Activated B cell treated with CpG ODN at 0.5 μM for 24 hours (primary cell): ENCODE measurements at regions of chr11 and their contacts with region 1.

Region 1: DNA sequence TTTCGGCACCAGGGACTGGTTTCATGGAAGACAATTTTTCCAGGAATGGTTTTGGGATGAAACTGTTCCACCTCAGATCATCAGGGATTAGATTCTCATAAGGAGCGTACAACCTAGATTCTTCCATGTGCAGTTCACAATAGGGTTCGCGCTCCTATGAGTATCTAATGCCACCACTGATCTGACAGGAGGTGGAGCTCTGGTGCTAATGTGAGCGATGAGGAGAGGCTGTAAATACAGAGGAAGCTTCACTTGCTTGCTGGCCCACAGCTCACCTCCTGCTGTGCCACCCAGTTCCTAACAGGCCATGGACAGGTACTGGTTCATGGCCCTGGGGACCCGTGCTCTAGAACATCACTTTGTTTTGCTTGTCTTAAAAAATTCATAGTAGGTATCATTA is 41.8 kb upstream of the AMPD3 start:
- DNase-seq: no peak
- ATAC-seq: peak; percentile 96
- H3K4me3 Mint-ChIP-seq: no peak overlapping the region
- H3K27ac Mint-ChIP-seq: no peak overlapping the region
- H3K4me1 Mint-ChIP-seq: peaks cover 22% of the 10 kb centered on the region
- H3K27me3 Mint-ChIP-seq: no peaks in the 10 kb centered on the region
- CTCF ChIP-seq: no peak

Region 2: DNA sequence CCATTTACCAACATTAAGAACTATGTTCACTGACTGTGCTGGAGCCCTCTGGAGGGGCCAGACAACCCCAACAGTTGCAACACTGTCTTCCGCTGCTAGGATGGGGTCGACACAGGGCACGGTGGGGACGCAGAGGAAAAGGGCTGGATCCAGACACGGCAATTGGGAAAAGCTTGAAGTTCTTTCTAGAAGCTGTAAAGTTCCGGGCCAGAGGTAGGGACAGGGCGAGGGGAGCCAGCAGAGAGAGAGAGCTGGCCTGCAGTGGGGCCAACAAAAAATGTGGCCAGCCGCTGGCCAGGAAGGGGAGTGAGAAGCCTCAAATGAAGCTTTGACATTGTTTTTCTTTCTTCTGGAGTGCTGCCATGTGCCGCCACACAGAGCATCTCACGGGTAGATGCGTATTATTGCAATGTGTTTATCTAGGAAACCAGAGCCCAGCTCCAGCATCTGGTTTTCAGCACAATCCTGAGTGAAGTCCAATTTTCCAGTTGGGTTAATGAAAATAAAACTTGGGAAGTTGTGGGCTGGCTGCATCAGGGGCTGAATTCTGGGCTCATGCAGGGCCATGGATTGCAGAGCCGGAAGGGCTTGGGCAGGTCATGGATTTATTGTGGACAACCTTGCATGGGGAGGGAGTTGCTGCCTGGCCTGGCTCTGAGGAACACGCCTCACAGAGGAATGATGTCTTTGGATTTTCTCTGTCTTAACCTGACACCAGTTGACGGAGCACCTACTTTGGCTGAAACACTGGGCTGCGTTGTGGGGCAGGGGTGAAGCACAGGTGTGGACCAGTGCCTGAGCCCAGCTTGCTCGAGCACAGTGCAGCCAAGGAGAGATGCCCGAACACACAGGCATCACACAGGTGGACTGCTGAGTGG is 25.8 kb before region 1 on chr11:
- CTCF ChIA-PET with region 1: no interaction called
- POLR2A ChIA-PET with region 1: no interaction called
- intact Hi-C with region 1: no loop called
- DNase-seq: no peak
- ATAC-seq: no peak
- H3K4me3 Mint-ChIP-seq: no peak overlapping the region
- H3K27ac Mint-ChIP-seq: no peak overlapping the region
- H3K4me1 Mint-ChIP-seq: no peaks in the 10 kb centered on the region
- H3K27me3 Mint-ChIP-seq: peaks cover 36% of the 10 kb centered on the region
- CTCF ChIP-seq: no peak

Region 3: DNA sequence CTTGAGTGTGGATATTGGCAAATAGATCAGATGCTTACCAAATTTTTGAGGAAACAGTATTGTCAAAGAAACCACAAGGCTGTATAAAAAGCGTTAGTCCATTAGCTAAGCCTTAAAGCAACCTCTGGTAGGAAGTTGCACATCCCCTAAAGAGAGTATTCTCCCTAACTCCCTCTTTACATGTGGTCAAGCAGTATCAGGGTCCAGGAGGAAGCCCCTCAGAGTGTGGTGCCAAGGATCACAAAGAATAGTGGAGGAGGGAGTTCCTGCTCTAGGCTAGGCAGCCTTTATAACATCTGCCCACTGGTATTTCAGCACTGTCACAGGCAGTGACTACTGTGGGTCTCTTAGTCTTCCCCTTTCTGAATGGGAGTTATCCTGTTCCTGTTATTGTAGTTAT is 23.0 kb after region 1 on chr11:
- CTCF ChIA-PET with region 1: interaction called, 14 read pairs
- POLR2A ChIA-PET with region 1: interaction called, 15 read pairs
- intact Hi-C with region 1: no loop called
- DNase-seq: no peak
- ATAC-seq: no peak
- H3K4me3 Mint-ChIP-seq: no peak overlapping the region
- H3K27ac Mint-ChIP-seq: peak overlapping the region; percentile 68
- H3K4me1 Mint-ChIP-seq: peaks cover 23% of the 10 kb centered on the region
- H3K27me3 Mint-ChIP-seq: no peaks in the 10 kb centered on the region
- CTCF ChIP-seq: no peak

Region 4: GRCh38 chr11:10450464-10451425 is 37.5 kb after region 1 on chr11:
- CTCF ChIA-PET with region 1: interaction called, 32 read pairs
- POLR2A ChIA-PET with region 1: interaction called, 18 read pairs
- intact Hi-C with region 1: loop called (anchors 2 kb)
- DNase-seq: peak; percentile 64
- ATAC-seq: peak; percentile 40
- H3K4me3 Mint-ChIP-seq: peak overlapping the region; percentile 90
- H3K27ac Mint-ChIP-seq: peak overlapping the region; percentile 94
- H3K4me1 Mint-ChIP-seq: peaks cover 60% of the 10 kb centered on the region
- H3K27me3 Mint-ChIP-seq: no peaks in the 10 kb centered on the region
- CTCF ChIP-seq: no peak

Region 5: GRCh38 chr11:10502770-10503169 is 89.5 kb after region 1 on chr11:
- CTCF ChIA-PET with region 1: interaction called, 29 read pairs
- POLR2A ChIA-PET with region 1: no interaction called
- intact Hi-C with region 1: no loop called
- DNase-seq: no peak
- ATAC-seq: peak; percentile 40
- H3K4me3 Mint-ChIP-seq: peak overlapping the region; percentile 12
- H3K27ac Mint-ChIP-seq: peak overlapping the region; percentile 77
- H3K4me1 Mint-ChIP-seq: peaks cover 26% of the 10 kb centered on the region
- H3K27me3 Mint-ChIP-seq: no peaks in the 10 kb centered on the region
- CTCF ChIP-seq: no peak

Region 6: DNA sequence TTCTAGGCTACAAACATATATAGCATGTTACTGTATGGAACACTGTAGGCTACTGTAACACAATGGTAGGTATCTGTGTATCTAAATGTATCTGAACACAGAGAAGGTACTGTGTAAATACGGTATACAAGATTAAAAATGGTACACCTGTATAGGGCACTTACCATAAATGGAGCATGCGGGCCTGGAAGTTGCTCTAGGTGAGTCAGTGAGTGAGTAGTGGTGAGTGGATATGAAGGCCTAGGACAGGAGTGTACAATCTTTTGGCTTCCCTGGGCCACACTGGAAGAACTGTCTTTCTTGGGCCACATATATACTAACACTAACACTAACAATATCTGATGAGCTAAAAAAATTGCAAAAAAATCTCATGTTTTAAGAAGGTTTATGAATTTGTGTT is 106.4 kb after region 1 on chr11:
- CTCF ChIA-PET with region 1: interaction called, 47 read pairs
- POLR2A ChIA-PET with region 1: interaction called, 3 read pairs
- intact Hi-C with region 1: loop called (anchors 1 kb)
- DNase-seq: no peak
- ATAC-seq: no peak
- H3K4me3 Mint-ChIP-seq: no peak overlapping the region
- H3K27ac Mint-ChIP-seq: no peak overlapping the region
- H3K4me1 Mint-ChIP-seq: peaks cover 14% of the 10 kb centered on the region
- H3K27me3 Mint-ChIP-seq: no peaks in the 10 kb centered on the region
- CTCF ChIP-seq: no peak

Region 7: GRCh38 chr11:10540923-10541560 is 127.8 kb after region 1 on chr11 and contains the start of gene RNF141:
- CTCF ChIA-PET with region 1: interaction called, 20 read pairs
- POLR2A ChIA-PET with region 1: interaction called, 10 read pairs
- intact Hi-C with region 1: loop called (anchors 1 kb)
- DNase-seq: peak; percentile 99
- ATAC-seq: peak; percentile 91
- H3K4me3 Mint-ChIP-seq: peak within 1 kb of the TSS; percentile 90
- H3K27ac Mint-ChIP-seq: peak within 1 kb of the TSS; percentile 95
- H3K4me1 Mint-ChIP-seq: peaks cover 80% of the 10 kb centered on the region
- H3K27me3 Mint-ChIP-seq: no peaks in the 10 kb centered on the region
- CTCF ChIP-seq: no peak
- total RNA-seq, gene RNF141: 32.8 and 36.9 TPM in 2 replicates

Region 8: DNA sequence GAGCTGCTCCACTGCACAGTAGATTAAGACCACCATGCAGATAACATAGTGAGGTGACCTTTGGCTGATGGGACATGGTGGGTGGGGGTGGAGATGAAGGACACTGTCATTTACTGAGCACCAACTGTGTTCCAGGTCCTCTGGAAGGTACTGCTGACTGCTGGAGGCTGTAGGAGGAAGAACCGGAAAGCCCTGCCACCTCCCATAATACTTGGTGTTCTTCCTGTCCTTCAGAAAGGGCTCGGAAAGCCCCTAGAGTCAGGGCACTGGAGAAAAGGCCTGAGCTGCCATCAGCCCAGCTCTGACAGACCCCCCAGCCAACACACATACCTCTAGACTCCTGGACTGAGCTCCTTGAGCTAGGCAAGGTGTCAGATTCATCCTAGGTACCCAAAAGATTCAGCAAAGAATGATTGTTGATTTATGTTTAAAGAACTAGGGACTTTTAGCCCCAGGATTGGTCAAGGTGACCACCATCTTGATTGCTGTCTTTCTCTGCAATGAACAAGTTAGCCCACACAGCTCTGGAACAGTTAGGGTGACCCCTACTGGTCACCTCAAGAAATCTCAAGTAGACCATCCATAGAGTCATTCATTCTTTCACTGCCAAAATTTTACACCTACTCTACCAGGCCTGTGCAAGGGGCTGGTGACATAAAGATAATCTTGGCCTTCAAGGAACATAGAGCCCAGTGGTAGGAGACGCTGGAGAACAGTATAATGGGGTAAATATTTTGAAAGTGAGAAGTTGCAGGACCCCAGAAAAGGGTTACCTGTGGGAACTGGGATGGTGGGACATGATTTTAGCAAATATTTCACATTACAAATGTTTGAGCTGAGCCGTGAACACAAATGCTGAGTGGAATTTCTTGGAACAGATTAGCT is 240.9 kb after region 1 on chr11:
- CTCF ChIA-PET with region 1: interaction called, 50 read pairs
- POLR2A ChIA-PET with region 1: interaction called, 6 read pairs
- intact Hi-C with region 1: loop called (anchors 1 kb)
- DNase-seq: no peak
- ATAC-seq: peak; percentile 53
- H3K4me3 Mint-ChIP-seq: no peak overlapping the region
- H3K27ac Mint-ChIP-seq: peak overlapping the region; percentile 38
- H3K4me1 Mint-ChIP-seq: peaks cover 87% of the 10 kb centered on the region
- H3K27me3 Mint-ChIP-seq: no peaks in the 10 kb centered on the region
- CTCF ChIP-seq: no peak